GM10248 (cell line): ENCODE measurements at regions of chr12 and their contacts with region 1.

Region 1: DNA sequence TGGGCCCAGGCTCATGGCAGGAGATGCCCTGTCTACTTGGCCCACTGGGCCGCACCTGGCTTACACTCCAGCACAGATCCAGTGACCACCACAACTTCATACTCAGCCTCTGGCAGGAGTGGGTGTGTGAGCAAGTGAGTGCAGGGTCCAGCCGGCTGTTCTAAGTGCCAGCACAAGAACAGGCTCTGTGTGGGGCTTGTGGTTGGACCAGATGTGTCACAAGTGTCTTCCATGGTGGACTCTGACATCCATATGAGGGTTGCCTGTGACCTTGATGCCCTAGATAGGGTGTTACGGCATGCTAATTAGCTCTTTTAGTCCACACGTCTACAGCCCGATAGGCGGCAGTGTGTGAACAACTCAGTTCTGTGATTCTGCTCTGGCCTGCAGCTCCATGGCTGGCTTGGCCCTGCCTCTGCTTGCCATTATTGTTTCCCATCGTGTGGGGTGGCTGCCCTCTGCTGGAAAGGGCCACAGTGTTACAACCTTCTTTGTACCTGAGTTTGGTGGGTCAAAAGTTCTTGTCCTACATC is 1089.1 kb downstream of the SLC6A15 start:
- DNase-seq: peak; percentile 26
- CTCF ChIP-seq: peak; percentile 33

Region 2: DNA sequence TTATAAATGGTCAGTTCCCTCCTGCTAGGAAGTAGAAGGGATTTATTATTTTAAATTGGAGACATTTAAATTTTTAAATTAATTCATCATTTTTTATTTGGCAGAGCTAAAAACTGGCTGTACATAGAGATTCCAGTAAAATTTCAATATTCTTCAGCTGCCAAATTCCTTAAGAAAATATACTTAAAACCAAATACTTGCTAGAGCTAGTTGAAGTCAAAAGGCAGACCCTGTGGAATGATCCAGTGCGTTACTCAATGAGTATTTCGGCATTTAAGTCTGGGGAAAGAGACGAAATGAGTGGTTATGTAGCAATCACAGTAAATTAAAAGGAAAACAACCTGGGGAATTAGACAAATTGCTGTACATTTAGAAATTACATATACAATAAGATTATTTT is 15.6 kb before region 1 on chr12:
- CTCF ChIA-PET with region 1: interaction called, 37 read pairs
- POLR2A ChIA-PET with region 1: no interaction called
- DNase-seq: no peak
- CTCF ChIP-seq: no peak

Region 3: DNA sequence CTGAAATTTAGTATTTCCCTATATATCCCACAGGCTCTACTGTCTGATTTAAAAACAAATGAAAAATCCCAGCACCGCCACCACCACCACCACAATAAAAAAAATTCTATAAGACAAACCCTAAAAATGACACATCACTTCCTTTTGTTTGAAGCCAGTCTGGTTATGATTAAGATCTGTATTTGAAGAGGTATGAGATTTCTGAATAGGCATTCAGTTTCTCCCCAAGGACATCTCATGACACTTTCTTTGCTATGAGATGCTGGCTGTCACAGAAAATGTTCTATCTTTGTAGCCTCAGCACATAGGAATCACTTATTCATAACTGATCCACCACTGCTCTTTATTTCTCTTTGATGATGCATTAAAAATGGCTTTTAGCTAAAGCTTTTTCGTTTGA is 18.1 kb after region 1 on chr12:
- CTCF ChIA-PET with region 1: interaction called, 16 read pairs
- POLR2A ChIA-PET with region 1: no interaction called
- DNase-seq: no peak
- CTCF ChIP-seq: no peak

Region 4: GRCh38 chr12:84315926-84316325 is 492.4 kb after region 1 on chr12:
- CTCF ChIA-PET with region 1: no interaction called
- POLR2A ChIA-PET with region 1: no interaction called
- DNase-seq: no peak
- CTCF ChIP-seq: no peak

Region 5: DNA sequence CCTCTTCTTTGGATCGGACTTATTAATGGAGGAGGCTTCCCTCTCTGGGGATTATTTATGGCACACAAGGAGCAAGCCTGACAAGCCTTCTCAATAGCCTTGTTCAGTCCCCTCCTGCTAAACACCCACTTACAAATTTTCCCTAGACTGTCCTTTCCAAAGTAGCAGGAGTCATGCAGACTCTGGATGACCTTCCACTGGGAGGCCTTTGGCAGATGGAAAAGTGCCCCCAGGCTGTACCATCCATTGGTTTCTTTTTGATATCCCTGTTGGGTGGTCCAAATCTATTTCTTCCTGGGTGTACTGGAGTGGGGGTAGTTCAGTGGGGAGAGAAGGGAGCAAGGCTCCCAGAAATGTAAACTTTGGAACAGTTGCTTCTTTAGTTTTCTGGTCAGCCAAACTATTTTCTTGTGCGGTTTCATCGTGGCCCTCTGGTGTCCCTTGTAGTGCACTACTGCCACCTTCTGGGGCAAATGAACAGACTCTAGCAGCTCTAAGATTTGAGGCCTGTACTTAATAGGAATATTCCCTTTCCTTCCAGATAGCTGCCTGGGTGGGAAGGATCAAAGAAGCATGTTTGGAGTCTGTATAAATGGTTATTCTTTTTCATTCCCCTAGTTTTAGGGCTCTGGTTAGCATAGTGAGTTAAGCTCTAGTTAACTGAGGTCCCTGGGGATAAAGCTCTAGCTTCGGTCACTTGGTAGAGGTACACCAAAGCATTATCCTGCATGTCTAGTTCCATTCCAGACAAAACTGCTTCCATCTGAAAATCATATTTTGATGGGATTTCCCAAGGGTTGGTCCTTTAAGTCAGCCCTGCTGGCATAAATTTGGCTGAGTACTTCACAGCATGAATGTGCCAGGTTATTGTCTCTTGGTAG is 679.6 kb after region 1 on chr12:
- CTCF ChIA-PET with region 1: interaction called, 15 read pairs
- POLR2A ChIA-PET with region 1: no interaction called
- DNase-seq: peak; percentile 13
- CTCF ChIP-seq: peak; percentile 54